Activated CD8-positive, alpha-beta T cell treated with anti-CD3 and anti-CD28 coated beads, Interleukin-2, amount 10 ng/mL, durations not matched to agents 7 days and 5 days (primary cell): ENCODE measurements at regions of chr17 and their contacts with region 1.

Region 1: GRCh38 chr17:38898812-38899348 is 26.5 kb upstream of the LASP1NB start:
- DNase-seq: peak; percentile 89
- ATAC-seq: peak; percentile 79
- H3K4me3 Mint-ChIP-seq: peak overlapping the region; percentile 75
- H3K27ac Mint-ChIP-seq: peak overlapping the region; percentile 96
- H3K4me1 Mint-ChIP-seq: peaks cover 76% of the 10 kb centered on the region
- H3K27me3 Mint-ChIP-seq: no peaks in the 10 kb centered on the region

Region 2: DNA sequence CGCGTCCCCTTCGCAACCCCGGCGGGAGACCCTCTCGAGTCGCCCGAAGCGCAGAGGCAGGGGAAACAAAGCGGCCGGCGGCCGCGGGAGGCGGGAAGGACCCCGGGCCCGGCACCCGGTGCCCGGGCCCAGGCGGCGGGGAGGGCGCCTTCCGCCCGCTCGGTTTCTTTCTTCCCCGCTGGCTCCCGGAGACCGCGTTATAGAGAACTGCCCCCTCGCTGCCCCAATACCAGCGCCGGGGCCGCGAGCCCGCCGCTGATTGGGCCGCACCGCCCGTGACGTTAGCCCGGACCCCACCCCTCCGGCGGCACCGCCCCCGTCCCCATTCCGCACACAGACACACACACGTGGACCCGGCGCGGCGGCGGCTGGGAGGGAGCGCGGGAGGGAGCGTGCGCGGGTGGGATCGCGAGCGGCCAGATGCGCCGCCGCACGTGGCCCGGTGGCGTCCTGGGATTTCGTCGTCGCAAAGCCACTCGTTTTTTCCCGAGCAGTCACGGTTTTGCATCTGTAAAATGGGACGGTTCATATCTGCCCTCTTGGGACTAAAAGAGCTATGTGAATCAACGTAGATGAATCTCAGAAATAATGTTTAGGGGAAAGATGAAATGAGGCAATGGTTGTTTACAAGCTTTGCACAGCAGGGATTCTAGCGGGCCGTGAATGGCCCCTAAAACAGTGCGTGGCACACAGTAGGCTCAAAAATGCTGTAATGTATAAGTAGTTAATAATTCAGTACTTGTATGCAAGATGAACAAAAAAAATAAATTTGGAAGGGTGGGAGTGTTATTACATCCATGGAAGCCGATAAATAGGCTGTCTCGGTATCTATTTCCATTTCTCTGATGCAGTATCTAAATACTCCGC is 223.9 kb before region 1 on chr17 and contains the start of gene EPOP:
- CTCF ChIA-PET with region 1: no interaction called
- POLR2A ChIA-PET with region 1: no interaction called
- DNase-seq: peak; percentile 91
- ATAC-seq: peak; percentile 89
- H3K4me3 Mint-ChIP-seq: peak within 1 kb of the TSS; percentile 54
- H3K27ac Mint-ChIP-seq: peak within 1 kb of the TSS; percentile 60
- H3K4me1 Mint-ChIP-seq: peaks cover 40% of the 10 kb centered on the region
- H3K27me3 Mint-ChIP-seq: peaks cover 22% of the 10 kb centered on the region
- total RNA-seq, gene EPOP: 11.4 to 11.6 TPM

Region 3: DNA sequence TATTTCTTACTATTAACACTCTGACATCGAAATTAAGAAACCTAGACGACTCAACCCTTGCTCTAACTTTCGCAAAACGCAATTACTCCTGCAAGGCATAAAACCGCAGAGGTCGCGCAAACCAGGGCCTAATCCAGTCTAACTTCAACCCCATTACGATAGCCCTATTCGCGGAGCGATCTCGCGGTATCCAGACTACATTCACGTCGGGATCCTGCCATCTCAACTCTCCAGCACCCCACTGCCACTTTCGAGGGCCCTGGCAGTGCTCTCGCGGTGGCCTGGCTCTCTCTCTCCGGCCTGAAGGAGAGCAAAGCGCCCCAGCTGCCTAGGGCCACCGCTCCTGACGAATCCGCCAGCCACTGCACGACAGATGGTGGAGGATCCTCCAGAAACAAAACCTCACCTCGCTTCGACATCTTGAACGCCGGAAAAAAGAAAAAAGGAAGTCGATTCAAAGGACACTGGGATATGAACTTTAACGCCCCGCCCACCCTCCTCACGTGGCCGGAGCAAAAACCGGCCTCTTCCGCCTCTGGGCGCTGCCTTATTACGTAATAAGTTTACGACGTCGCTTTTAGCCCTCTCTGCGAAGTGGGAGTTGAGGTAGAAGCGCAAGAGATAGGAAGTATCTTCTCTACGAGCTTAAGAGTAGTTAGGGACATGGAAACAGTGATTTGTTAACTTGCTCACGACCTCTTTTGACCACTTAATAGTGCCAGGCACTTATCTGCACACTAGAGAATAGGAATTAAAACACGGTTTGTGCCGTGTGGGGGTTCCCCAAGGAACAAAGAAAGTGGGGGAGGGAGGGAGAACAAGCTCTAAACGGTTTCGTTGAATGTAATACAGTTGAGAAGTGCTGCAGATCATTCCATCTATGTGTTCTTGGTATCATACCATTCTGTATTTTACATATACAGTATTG is 45.3 kb before region 1 on chr17 and contains the start of gene RPL23:
- CTCF ChIA-PET with region 1: no interaction called
- POLR2A ChIA-PET with region 1: interaction called, 26 read pairs
- DNase-seq: peak; percentile 96
- ATAC-seq: peak; percentile 88
- H3K4me3 Mint-ChIP-seq: peak within 1 kb of the TSS; percentile 99
- H3K27ac Mint-ChIP-seq: peak within 1 kb of the TSS; percentile 99
- H3K4me1 Mint-ChIP-seq: peaks cover 39% of the 10 kb centered on the region
- H3K27me3 Mint-ChIP-seq: no peaks in the 10 kb centered on the region
- total RNA-seq, gene RPL23: 1,130 to 1,164 TPM

Region 4: GRCh38 chr17:38868817-38869525 is 29.9 kb before region 1 on chr17:
- CTCF ChIA-PET with region 1: interaction called, 82 read pairs
- POLR2A ChIA-PET with region 1: interaction called, 57 read pairs
- DNase-seq: peak; percentile 90
- ATAC-seq: peak; percentile 54
- H3K4me3 Mint-ChIP-seq: peak overlapping the region; percentile 99
- H3K27ac Mint-ChIP-seq: peak overlapping the region; percentile 85
- H3K4me1 Mint-ChIP-seq: peaks cover 42% of the 10 kb centered on the region
- H3K27me3 Mint-ChIP-seq: no peaks in the 10 kb centered on the region

Region 5: DNA sequence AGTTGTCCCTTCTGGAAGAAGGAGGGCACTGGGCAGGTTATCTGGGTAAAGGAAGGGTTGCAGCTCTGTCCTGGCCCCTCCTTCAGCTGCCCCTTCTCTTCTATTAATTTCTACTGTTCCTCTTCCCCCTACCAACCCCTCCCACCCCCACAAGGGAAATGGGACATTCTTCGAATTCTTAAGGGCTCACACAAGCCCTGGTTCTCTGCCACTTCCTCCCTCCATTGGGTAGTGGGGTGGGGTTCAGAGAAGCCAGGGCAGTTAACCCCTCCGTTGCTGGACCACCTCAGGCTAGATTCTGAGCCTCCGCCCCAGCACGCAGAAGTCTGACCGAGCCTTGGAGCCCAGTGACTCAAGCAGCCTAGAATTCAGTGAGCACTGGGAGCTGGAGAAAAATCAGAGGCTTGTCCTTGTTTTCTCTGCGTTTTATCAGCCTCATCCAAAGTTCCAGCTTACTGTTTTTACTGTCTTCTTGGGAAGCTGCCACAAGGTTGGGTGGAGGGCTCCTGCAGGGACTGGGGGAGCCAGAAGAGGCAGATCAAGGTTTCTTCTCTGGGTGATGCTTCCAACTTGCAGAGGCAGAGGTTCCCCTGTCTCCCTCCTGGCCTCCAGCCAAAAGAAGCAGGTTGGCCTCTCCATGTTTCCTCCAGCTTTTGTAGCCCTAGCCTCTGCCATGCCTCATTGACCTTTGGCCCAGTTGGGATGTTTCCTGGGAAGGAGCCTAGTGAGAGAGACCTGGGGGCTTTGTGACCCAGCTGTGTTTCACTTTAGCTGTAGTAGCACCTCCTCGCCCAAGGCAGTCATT is 18.8 kb before region 1 on chr17:
- CTCF ChIA-PET with region 1: interaction called, 11 read pairs
- POLR2A ChIA-PET with region 1: interaction called, 12 read pairs
- DNase-seq: peak; percentile 67
- ATAC-seq: peak; percentile 5
- H3K4me3 Mint-ChIP-seq: peak overlapping the region; percentile 66
- H3K27ac Mint-ChIP-seq: peak overlapping the region; percentile 88
- H3K4me1 Mint-ChIP-seq: peaks cover 90% of the 10 kb centered on the region
- H3K27me3 Mint-ChIP-seq: no peaks in the 10 kb centered on the region

Region 6: DNA sequence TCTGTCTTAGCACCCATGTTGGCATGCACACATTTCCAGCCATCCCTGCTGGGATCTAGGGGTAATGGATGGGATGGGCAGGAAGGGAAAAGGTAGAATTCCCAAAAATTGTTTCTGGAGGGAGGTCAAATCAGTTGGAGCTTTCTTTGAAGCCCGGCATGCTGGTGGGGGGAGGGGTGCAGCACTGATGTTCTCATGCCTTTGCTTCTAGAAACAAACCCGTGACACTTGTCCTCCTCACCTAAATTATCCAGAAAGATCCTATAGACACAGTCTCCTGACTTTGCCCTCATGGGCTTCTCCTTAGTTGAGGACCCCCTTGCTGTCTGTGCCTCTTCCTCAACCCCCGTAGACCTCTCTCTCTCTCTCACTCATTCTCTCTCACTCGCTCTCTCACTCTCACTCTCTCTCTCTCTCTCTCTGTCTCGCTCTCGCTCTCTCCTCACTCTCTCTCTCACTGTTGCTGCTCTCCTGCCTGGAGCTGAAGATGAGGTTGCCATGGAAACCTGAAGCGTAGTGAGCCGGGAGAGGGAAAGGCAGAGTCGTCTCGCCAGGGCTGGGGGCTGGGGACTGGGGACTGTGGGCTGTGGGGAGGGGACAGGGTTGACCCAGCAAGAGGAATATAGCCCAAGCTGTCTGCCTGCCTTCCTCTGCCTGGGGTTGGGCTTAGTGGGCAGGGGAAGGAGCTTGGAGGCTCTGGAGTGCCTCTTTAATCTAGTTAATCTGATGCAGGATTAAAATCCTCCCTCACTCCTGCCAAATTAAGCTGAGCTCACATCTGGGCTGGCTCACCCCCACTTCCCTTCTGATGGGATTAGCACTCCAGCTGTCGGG is 12.9 kb before region 1 on chr17:
- CTCF ChIA-PET with region 1: interaction called, 11 read pairs
- POLR2A ChIA-PET with region 1: interaction called, 12 read pairs
- DNase-seq: no peak
- ATAC-seq: no peak
- H3K4me3 Mint-ChIP-seq: peak overlapping the region; percentile 37
- H3K27ac Mint-ChIP-seq: peak overlapping the region; percentile 76
- H3K4me1 Mint-ChIP-seq: peaks cover 94% of the 10 kb centered on the region
- H3K27me3 Mint-ChIP-seq: no peaks in the 10 kb centered on the region

Region 7: DNA sequence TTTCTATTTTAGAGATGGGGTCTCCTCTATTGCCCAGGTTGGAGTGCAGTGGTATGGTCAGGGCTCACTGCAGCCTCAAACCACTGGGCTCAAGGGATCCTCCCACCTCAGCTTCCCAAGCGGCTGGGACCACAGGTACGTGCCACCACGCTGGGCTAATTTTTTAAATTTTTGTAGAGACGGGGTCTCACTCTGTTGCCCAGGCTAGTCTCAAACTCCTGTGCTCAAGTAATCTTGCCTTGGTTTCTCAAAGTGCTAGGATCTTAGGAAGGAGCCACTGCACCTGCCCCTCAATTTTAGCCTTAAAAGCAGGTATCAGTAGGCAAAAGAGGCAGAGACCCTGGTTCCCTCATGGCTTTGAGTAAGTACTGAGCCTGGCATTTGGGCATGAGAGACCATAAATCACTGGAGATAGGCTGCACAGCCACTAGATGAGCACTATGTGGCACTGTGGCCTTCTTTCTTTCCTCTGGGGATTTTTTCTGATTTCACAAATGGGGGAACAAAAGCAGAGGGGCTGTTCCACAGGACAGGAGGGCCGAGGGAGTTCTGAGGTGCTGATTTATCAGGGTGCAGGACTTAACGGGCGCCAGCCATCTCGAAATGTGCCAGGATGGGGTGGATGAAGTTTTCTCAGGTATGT is 170.4 kb after region 1 on chr17:
- CTCF ChIA-PET with region 1: no interaction called
- POLR2A ChIA-PET with region 1: no interaction called
- DNase-seq: peak; percentile 59
- ATAC-seq: peak; percentile 79
- H3K4me3 Mint-ChIP-seq: no peak overlapping the region
- H3K27ac Mint-ChIP-seq: no peak overlapping the region
- H3K4me1 Mint-ChIP-seq: peaks cover 18% of the 10 kb centered on the region
- H3K27me3 Mint-ChIP-seq: peaks cover 4% of the 10 kb centered on the region